PC-3 (cell line): ENCODE measurements at regions of chr18 and their contacts with region 1.

Region 1: GRCh38 chr18:7566567-7567473 is at the start of gene PTPRM:
- DNase-seq: peak; percentile 88
- ATAC-seq: peak; percentile 77
- H3K4me3 ChIP-seq: peak within 1 kb of the TSS; percentile 95
- H3K27ac ChIP-seq: peak within 1 kb of the TSS; percentile 33
- H3K4me1 ChIP-seq: peaks cover 33% of the 10 kb centered on the region
- H3K27me3 ChIP-seq: no peaks in the 10 kb centered on the region
- CTCF ChIP-seq: no peak
- total RNA-seq, gene PTPRM: 45.6 and 61.3 TPM in 2 replicates

Region 2: DNA sequence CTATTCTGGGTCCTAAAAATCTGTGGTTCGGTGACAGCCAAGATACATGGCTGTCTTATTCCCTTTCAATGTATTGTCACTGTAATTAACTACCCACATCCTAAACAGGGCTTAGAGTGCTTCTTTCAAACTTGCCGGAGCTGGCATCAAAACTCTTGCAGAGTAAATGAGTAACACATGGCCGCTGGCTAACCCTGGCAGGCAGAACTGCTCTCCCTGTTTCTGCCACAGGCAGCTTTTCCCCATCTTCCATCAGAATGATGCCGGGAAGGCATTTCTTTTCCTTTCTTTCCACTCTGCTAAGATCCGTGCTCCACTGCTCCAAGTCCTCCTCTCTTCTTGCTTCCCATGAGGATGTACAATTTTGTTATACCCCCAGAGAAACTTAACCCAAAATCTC is 54.5 kb before region 1 on chr18:
- CTCF ChIA-PET with region 1: no interaction called
- POLR2A ChIA-PET with region 1: no interaction called
- intact Hi-C with region 1: loop called (anchors 10 kb)
- DNase-seq: no peak
- ATAC-seq: no peak
- H3K4me3 ChIP-seq: no peak overlapping the region
- H3K27ac ChIP-seq: no peak overlapping the region
- H3K4me1 ChIP-seq: no peaks in the 10 kb centered on the region
- H3K27me3 ChIP-seq: peaks cover 100% of the 10 kb centered on the region
- CTCF ChIP-seq: no peak

Region 3: DNA sequence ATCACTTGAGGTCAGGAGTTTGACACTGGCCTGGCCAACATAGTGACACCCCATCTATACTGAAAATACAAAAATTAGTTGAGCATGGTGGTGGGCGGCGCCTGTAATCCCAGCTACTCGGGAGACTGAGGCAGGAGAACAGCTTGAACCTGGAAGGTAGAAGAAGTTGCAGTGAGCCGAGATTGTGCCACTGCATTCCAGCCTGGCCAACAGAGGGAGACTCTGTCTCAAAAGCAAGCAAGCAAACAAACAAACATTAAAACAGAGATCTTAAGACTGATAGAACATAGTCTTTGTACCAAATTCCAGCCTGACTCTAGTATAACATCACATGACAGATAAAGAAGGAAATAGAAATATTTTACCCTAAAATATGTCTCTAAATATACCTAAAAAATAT is 168.4 kb after region 1 on chr18:
- CTCF ChIA-PET with region 1: no interaction called
- POLR2A ChIA-PET with region 1: interaction called, 10 read pairs
- intact Hi-C with region 1: no loop called
- DNase-seq: no peak
- ATAC-seq: peak; percentile 42; the same call in 1 of the 2 replicates
- H3K4me3 ChIP-seq: no peak overlapping the region
- H3K27ac ChIP-seq: no peak overlapping the region
- H3K4me1 ChIP-seq: no peaks in the 10 kb centered on the region
- H3K27me3 ChIP-seq: no peaks in the 10 kb centered on the region
- CTCF ChIP-seq: peak; percentile 57; the same call in 1 of the 2 replicates

Region 4: GRCh38 chr18:7926526-7926925 is 359.7 kb after region 1 on chr18:
- CTCF ChIA-PET with region 1: no interaction called
- POLR2A ChIA-PET with region 1: no interaction called
- intact Hi-C with region 1: loop called (anchors 10 kb)
- DNase-seq: peak; percentile 48
- ATAC-seq: 0 out of 2 replicates have a peak, but pooled peaks have one; percentile 2
- H3K4me3 ChIP-seq: no peak overlapping the region
- H3K27ac ChIP-seq: no peak overlapping the region
- H3K4me1 ChIP-seq: peaks cover 34% of the 10 kb centered on the region
- H3K27me3 ChIP-seq: no peaks in the 10 kb centered on the region
- CTCF ChIP-seq: peak; percentile 59